Uterus (tissue), 4 donors: ENCODE measurements at regions of chr17 and their contacts with region 1.

Region 1: GRCh38 chr17:40019140-40019991 is 4.1 kb downstream of the CSF3 start:
- DNase-seq: peak; percentile 77 to 80
- H3K4me3 ChIP-seq: no peak overlapping the region
- H3K27ac ChIP-seq: peak overlapping the region; percentile 82 to 86
- H3K4me1 ChIP-seq: peaks cover 0 to 65% of the 10 kb centered on the region in 2 donors
- H3K27me3 ChIP-seq: no peaks in the 10 kb centered on the region
- CTCF ChIP-seq: peak in 1 of 4 experiments; percentile 12
- POLR2A ChIP-seq: no peak

Region 2: DNA sequence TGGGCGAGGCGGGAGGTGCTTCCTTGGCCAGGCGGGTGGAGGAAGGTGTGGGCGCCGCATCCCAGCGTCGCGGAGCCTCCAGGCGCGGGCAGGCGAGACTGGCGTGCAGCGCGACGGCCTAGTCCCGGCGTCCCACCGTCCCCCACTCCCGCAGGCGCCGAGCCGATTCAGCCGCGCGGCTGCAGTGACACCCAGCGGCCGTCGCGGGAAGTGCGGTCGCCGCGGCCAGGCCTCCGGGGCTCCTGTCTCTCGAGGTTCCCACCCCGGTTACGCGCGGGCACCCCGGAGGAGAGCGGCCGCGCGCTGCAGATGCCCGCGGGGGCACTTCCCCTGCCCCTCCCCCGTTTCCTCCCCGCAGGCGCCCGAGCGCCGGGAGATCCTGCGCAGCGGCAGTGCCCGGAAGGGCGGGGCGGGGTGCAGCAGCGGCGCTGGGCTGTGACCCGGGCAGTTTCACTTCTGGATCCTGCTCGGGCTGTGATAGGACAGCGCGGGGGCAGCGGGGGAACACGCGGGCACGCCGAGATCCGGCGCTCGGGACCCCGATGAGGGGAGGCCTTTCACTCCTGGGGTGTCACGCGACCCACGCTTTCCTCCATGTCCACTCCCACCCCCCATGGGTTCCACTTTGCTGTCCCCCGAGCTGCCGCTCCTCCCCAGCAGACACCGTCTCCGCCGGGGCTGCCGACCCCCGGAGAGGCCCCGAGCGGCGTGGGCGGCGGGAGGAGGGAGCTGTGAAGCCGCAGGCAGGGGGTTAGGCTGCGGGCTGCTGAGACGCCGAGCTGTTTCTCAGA is 265.0 kb before region 1 on chr17:
- intact Hi-C with region 1: no loop called
- DNase-seq: peak; percentile 84 to 89
- H3K4me3 ChIP-seq: peak overlapping the region; percentile 66 to 72
- H3K27ac ChIP-seq: peak overlapping the region; percentile 91 to 96
- H3K4me1 ChIP-seq: no peaks in the 10 kb centered on the region
- H3K27me3 ChIP-seq: no peaks in the 10 kb centered on the region
- CTCF ChIP-seq: peak; percentile 92 to 99 (median 96)
- POLR2A ChIP-seq: peak; percentile 52 to 67

Region 3: GRCh38 chr17:40075201-40075941 is 56.0 kb after region 1 on chr17:
- intact Hi-C with region 1: loop called (anchors 10 kb)
- DNase-seq: peak; percentile 74 to 77
- H3K4me3 ChIP-seq: no peak overlapping the region
- H3K27ac ChIP-seq: peak overlapping the region; percentile 98
- H3K4me1 ChIP-seq: peaks cover 14 to 34% of the 10 kb centered on the region in 2 donors
- H3K27me3 ChIP-seq: no peaks in the 10 kb centered on the region
- CTCF ChIP-seq: peak; percentile 88 to 94 (median 92)
- POLR2A ChIP-seq: peak in 1 of 2 donors; percentile 22

Region 4: DNA sequence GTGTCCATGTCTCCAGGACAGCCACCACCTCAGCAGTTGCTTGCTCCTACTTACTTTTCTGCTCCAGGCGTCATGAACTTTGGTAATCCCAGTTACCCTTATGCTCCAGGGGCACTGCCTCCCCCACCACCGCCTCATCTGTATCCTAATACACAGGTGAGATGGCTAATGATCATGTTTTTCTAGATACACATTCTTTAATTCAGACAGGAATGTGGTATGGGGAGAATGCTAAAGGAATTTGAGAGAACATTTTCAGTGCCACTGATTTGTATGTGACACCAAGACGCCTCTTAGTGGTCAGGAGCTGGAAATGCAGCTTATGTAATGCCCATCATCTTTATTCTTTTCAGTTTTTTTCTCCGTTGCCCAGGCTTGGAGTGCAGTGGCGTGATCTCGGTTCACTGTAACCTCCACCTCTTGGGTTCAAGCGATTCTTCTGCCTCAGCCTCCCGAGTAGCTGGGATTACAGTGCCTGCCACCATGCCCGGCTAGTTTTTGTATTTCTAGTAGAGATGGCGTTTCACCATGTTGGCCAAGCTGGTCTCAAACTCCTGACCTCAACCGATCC is 149.0 kb after region 1 on chr17:
- intact Hi-C with region 1: loop called (anchors 10 kb)
- DNase-seq: peak in 1 of 2 donors; percentile 53
- H3K4me3 ChIP-seq: no peak overlapping the region
- H3K27ac ChIP-seq: peak overlapping the region; percentile 27 to 61
- H3K4me1 ChIP-seq: no peaks in the 10 kb centered on the region
- H3K27me3 ChIP-seq: no peaks in the 10 kb centered on the region
- CTCF ChIP-seq: peak; percentile 82 to 96 (median 88)
- POLR2A ChIP-seq: no peak